HEK293 (cell line): ENCODE measurements at regions of chr2 and their contacts with region 1.

Region 1: GRCh38 chr2:23312996-23313606 is 71.9 kb upstream of the KLHL29 start:
- H3K4me3 ChIP-seq: no peak overlapping the region
- H3K27ac ChIP-seq: no peak overlapping the region
- H3K4me1 ChIP-seq: no peaks in the 10 kb centered on the region
- CTCF ChIP-seq: no peak

Region 2: DNA sequence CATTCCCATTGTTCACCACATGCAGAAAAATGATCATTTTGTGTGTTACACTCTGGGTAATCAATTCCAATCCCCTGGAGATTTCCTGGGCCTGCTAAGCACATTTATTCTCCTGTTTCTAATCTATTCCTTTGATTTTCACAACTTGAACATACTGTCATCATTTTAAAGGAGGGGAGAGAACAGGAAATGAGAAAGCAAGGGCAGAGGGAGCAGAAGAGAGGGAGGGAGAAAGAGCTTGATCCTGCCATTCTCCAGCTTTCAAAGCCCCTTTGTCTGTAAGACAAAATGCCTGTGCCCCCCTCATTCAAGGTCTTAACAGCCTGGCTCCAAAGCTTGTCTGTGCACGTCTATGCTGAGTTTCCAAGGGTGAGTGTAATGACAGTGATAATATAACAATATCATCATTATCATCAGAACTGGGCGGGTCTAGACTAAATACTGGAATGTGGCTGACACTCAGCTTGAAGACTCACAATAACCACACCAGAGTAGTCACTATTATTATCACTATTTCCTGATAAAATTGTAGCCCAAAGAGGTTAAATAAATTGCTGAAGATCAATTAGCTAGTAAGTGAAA is 92.5 kb before region 1 on chr2:
- CTCF ChIA-PET with region 1: no interaction called
- POLR2A ChIA-PET with region 1: no interaction called
- H3K4me3 ChIP-seq: no peak overlapping the region
- H3K27ac ChIP-seq: no peak overlapping the region
- H3K4me1 ChIP-seq: no peaks in the 10 kb centered on the region
- CTCF ChIP-seq: no peak

Region 3: GRCh38 chr2:23301136-23301535 is 12.0 kb before region 1 on chr2:
- CTCF ChIA-PET with region 1: interaction called, 10 read pairs
- POLR2A ChIA-PET with region 1: no interaction called
- H3K4me3 ChIP-seq: no peak overlapping the region
- H3K27ac ChIP-seq: no peak overlapping the region
- H3K4me1 ChIP-seq: no peaks in the 10 kb centered on the region
- CTCF ChIP-seq: no peak

Region 4: DNA sequence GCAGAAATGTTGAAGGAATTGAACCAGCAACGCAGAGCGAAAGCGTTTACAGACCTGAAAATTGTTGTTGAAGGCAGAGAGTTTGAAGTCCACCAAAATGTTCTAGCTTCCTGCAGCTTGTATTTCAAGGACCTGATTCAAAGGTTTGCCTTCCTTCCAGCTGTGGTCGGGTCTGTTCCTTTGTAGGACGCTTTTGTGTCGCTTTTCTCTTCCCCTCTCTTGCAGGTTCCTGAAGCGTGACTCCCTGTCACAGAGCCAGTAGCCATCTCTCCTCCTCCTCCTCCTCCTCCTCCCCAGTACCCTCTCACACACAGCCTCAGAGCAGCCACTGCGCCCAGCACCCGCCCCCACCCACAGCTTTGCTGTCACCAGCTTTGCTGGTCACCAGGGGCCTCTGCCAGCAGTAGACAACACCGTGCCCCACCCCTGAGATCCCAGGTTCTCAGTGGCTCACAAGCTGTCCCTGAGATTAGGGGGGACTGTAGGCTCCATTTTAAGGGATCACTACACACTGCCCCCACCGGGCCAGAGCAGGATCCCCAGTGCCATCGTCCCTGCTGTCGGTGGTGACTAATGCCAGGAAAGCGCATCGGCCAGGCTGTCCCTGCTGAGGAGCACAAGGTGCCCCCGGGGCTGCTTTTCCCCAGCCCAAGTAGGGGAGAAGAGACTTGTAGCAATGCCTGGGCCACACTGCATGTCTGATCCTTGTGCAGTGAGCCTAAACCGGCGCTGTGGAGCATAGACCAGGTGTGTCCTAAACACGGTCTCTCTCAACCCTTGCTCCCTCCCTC is 371.5 kb after region 1 on chr2:
- CTCF ChIA-PET with region 1: no interaction called
- POLR2A ChIA-PET with region 1: no interaction called
- H3K4me3 ChIP-seq: no peak overlapping the region
- H3K27ac ChIP-seq: no peak overlapping the region
- H3K4me1 ChIP-seq: no peaks in the 10 kb centered on the region
- CTCF ChIP-seq: no peak